ENCODE measurements at regions of chr2 and their contacts with region 1.

Region 1: DNA sequence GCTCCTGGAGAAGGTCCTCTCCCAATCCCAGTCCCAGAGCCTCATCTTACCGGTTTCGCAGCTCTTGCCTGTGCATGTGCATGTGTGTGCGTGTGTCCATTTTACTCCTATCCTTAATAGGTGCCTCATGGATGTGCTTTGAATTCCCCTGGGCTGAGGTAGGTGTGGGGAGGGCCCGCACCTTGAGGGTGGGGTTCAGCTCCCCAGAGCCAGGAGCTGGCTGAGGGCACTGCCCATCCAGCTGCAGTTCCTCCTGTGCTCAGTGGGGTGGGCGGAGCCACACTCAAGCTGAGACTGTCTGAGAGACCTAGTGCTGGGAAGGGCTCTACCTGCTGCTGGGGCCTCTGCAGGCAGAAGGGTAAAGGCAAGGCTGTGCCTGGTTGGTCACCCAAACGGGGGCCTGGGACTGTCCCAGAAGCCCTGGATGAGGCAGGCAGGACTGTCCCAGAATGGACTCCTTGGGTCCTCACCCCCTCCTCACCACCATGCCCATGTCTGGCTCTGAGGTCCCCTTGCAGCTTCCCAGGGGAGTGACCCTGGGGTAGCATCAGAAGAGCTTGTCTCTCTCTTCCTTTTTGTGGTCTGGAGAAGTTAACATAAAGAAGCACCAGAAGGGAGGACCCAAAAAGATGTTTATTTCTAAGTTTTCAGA is 8.9 kb downstream of the GDF7 start:
- DNase-seq: peak; percentile 78
- ATAC-seq: peak; percentile 87
- H3K4me3 ChIP-seq: peak overlapping the region; percentile 7 to 64 (median 36); a peak in 3 of 6 replicates
- H3K27ac ChIP-seq: peak overlapping the region; percentile 75
- H3K4me1 ChIP-seq: peaks cover 44% of the 10 kb centered on the region
- H3K27me3 ChIP-seq: no peaks in the 10 kb centered on the region
- CTCF ChIP-seq: no peak
- EP300 ChIP-seq: 0 out of 4 replicates have a peak, but pooled peaks of 1 of the 2 experiments have one; percentile 7
- POLR2A ChIP-seq: 0 out of 4 replicates have a peak, but pooled peaks of 1 of the 2 experiments have one; percentile 19
- RAD21 ChIP-seq: peak; percentile 12; the same call in 1 of the 2 replicates

Region 2: GRCh38 chr2:19863303-19864041 is 812.4 kb before region 1 on chr2:
- CTCF ChIA-PET with region 1: no interaction called
- POLR2A ChIA-PET with region 1: no interaction called
- in situ Hi-C with region 1: no loop called
- intact Hi-C with region 1: no loop called
- DNase-seq: peak; percentile 76
- ATAC-seq: peak; percentile 96
- H3K4me3 ChIP-seq: peak overlapping the region; percentile 46 to 77 (median 57)
- H3K27ac ChIP-seq: peak overlapping the region; percentile 26
- H3K4me1 ChIP-seq: peaks cover 36% of the 10 kb centered on the region
- H3K27me3 ChIP-seq: peaks cover 2 to 18% of the 10 kb centered on the region in 2 experiments; a peak in 3 of 5 replicates
- CTCF ChIP-seq: peak; percentile 100
- EP300 ChIP-seq: no peak
- POLR2A ChIP-seq: peak in 1 of 2 experiments; percentile 60; a peak in 2 of 4 replicates
- RAD21 ChIP-seq: peak; percentile 100

Region 3: DNA sequence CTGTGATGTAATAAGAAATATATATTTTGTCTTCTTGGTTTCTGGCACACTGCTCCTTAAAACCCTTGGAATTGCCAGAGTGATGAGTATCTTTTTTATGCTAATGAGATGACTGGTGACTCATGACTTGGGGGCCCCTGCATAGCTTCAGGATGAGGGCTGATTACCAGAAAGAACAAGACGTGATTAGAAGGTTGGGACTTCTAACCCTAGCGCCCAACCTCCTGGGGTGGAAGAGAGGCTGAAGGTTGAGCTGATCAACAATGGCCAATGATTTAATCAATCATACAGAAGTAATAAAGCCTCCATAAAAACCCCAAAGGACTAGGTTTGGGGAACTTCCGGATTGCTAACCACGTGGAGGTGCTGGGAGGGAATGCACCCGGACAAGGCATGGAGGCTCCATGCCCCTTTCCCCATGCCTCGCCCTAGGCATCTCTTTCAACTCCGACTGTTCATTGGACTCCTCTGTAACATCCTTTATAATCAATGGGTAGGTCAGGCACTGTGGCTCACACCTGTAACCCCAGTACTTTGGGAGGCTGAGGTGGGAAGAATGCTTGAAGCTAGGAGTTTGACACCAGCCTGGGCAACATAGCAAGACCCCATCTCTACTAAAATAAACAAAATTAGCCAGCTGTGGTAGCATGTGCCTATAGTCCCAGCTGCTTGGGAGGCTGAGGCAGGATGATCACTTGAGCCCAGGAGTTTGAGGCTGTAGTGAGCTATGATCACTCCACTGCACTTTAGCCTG is 113.9 kb before region 1 on chr2:
- CTCF ChIA-PET with region 1: no interaction called
- POLR2A ChIA-PET with region 1: no interaction called
- in situ Hi-C with region 1: no loop called
- intact Hi-C with region 1: no loop called
- DNase-seq: no peak
- ATAC-seq: no peak
- H3K4me3 ChIP-seq: no peak overlapping the region
- H3K27ac ChIP-seq: no peak overlapping the region
- H3K4me1 ChIP-seq: peaks cover 55% of the 10 kb centered on the region
- H3K27me3 ChIP-seq: no peaks in the 10 kb centered on the region
- CTCF ChIP-seq: no peak
- EP300 ChIP-seq: no peak
- POLR2A ChIP-seq: no peak
- RAD21 ChIP-seq: no peak

Region 4: GRCh38 chr2:20661067-20661980 is 14.5 kb before region 1 on chr2:
- CTCF ChIA-PET with region 1: interaction called, 61 read pairs
- POLR2A ChIA-PET with region 1: interaction called, 216 read pairs
- in situ Hi-C with region 1: no loop called
- intact Hi-C with region 1: loop called (anchors 1 kb)
- DNase-seq: peak; percentile 78
- ATAC-seq: peak; percentile 38
- H3K4me3 ChIP-seq: peak overlapping the region in 1 of 3 experiments; percentile 15; a peak in 1 of 6 replicates
- H3K27ac ChIP-seq: no peak overlapping the region
- H3K4me1 ChIP-seq: peaks cover 38% of the 10 kb centered on the region
- H3K27me3 ChIP-seq: peaks cover 26 to 66% of the 10 kb centered on the region in 2 experiments; a peak in 4 of 5 replicates
- CTCF ChIP-seq: peak; percentile 99
- EP300 ChIP-seq: no peak
- POLR2A ChIP-seq: no peak
- RAD21 ChIP-seq: peak; percentile 97

Region 5: GRCh38 chr2:20698916-20699613 is 23.2 kb after region 1 on chr2:
- CTCF ChIA-PET with region 1: no interaction called
- POLR2A ChIA-PET with region 1: no interaction called
- in situ Hi-C with region 1: no loop called
- intact Hi-C with region 1: no loop called
- DNase-seq: no peak
- ATAC-seq: no peak
- H3K4me3 ChIP-seq: no peak overlapping the region
- H3K27ac ChIP-seq: no peak overlapping the region
- H3K4me1 ChIP-seq: peaks cover 15% of the 10 kb centered on the region
- H3K27me3 ChIP-seq: no peaks in the 10 kb centered on the region
- CTCF ChIP-seq: no peak
- EP300 ChIP-seq: no peak
- POLR2A ChIP-seq: no peak
- RAD21 ChIP-seq: no peak

Region 6: GRCh38 chr2:20728114-20728758 is 52.4 kb after region 1 on chr2:
- CTCF ChIA-PET with region 1: no interaction called
- POLR2A ChIA-PET with region 1: interaction called, 9 read pairs
- in situ Hi-C with region 1: no loop called
- intact Hi-C with region 1: loop called (anchors 2 kb)
- DNase-seq: peak; percentile 91
- ATAC-seq: peak; percentile 95
- H3K4me3 ChIP-seq: peak overlapping the region in 1 of 3 experiments; percentile 4; a peak in 1 of 6 replicates
- H3K27ac ChIP-seq: peak overlapping the region; percentile 57
- H3K4me1 ChIP-seq: peaks cover 30% of the 10 kb centered on the region
- H3K27me3 ChIP-seq: no peaks in the 10 kb centered on the region
- CTCF ChIP-seq: 0 out of 2 replicates have a peak, but pooled peaks have one; percentile 13
- EP300 ChIP-seq: peak; percentile 69 to 92; a peak in 2 of 4 replicates
- POLR2A ChIP-seq: no peak
- RAD21 ChIP-seq: no peak

Region 7: DNA sequence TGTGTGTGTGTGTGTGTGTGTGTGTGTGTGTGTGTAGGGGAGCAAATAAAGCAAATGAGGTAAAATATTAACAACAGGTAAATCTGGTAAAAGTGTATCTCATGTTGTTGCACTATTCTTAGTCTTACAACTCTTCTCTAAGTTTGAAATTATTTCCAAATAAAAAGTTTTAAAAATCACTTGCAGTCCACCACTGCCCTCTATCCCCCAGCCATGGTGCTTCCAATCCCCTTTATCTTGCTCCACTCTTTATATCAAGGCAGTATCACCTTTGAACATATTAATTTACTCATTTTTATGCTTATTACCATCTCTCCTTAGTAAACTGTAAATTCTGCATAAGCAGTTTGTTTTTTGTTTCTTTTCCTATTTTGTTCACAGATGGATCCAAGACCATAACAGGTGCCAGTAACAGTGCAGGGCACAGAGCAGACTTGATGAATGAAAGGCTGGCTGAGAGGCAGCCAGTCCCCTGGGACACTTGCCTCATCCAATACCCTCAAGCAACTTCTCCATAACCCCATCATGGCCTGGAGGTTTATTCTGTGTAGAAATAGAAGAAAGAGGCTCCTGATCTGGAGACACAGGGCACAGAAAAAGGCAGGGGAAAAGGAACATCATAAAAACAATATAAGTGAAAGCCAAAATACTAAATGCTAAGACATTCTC is 79.4 kb after region 1 on chr2:
- CTCF ChIA-PET with region 1: no interaction called
- POLR2A ChIA-PET with region 1: no interaction called
- in situ Hi-C with region 1: no loop called
- intact Hi-C with region 1: loop called (anchors 5 kb)
- DNase-seq: no peak
- ATAC-seq: peak; percentile 36; the same call in 2 of the 3 replicates
- H3K4me3 ChIP-seq: no peak overlapping the region
- H3K27ac ChIP-seq: no peak overlapping the region
- H3K4me1 ChIP-seq: peaks cover 11% of the 10 kb centered on the region
- H3K27me3 ChIP-seq: no peaks in the 10 kb centered on the region
- CTCF ChIP-seq: peak; percentile 26; the same call in 1 of the 2 replicates
- EP300 ChIP-seq: no peak
- POLR2A ChIP-seq: no peak
- RAD21 ChIP-seq: no peak

Region 8: DNA sequence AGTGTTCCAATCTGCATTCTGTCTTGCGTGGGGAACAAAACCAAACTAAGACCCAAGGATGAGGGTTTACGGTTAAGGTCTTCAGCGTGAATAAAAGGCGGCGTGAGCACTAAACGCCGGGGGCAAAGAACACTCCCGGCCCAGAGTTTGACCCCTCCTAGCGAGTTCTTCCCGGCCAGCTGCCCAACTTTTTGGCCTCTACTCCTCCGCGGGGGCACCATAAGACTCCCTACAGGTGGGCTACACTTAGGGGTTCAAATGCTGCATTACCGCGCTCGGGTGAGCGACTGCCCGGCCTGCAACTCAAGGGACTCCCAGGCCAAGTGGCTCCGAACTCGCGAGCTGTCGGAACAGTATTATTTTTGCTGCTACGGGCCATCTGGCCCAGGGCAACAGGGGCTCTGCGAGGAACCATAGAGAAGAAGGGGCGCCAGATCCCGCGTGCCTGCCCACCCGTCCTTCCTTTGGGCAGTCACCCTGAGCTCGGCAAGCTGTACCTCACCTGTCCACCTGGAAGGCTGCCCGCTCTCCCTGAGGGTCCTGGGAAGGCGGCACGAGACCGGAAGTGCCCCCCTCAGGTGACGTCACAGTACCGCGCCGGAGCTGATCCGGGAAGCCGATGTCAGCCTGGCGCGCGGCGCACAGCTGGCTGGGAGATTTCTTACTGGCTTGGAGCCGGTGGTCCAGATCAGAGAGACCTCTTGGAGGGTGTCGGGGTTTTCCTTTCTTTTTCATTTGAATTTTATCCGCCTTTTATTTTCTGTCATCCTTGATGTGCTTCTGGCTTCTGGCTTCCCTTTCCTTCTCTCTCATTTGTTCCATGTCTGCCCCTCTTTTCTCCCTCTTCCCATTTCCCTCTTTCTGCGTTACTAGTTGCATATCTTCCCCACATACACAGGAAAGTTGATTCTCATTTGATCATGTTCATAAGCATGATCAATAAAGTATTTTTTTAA is 147.0 kb after region 1 on chr2 and contains the start of gene LDAH:
- CTCF ChIA-PET with region 1: no interaction called
- POLR2A ChIA-PET with region 1: interaction called, 13 read pairs
- in situ Hi-C with region 1: no loop called
- intact Hi-C with region 1: no loop called
- DNase-seq: peak; percentile 91
- ATAC-seq: peak; percentile 91
- H3K4me3 ChIP-seq: peak within 1 kb of the TSS; percentile 79 to 90 (median 87)
- H3K27ac ChIP-seq: peak within 1 kb of the TSS; percentile 91
- H3K4me1 ChIP-seq: peaks cover 13% of the 10 kb centered on the region
- H3K27me3 ChIP-seq: no peaks in the 10 kb centered on the region; a peak in 1 of 5 replicates
- CTCF ChIP-seq: no peak
- EP300 ChIP-seq: peak in 1 of 2 experiments; percentile 62; a peak in 2 of 4 replicates
- POLR2A ChIP-seq: peak; percentile 93 to 95
- RAD21 ChIP-seq: peak; percentile 59; the same call in 1 of the 2 replicates
- total RNA-seq, gene LDAH: 46.2 and 66.4 TPM in 2 replicates

Region 9: DNA sequence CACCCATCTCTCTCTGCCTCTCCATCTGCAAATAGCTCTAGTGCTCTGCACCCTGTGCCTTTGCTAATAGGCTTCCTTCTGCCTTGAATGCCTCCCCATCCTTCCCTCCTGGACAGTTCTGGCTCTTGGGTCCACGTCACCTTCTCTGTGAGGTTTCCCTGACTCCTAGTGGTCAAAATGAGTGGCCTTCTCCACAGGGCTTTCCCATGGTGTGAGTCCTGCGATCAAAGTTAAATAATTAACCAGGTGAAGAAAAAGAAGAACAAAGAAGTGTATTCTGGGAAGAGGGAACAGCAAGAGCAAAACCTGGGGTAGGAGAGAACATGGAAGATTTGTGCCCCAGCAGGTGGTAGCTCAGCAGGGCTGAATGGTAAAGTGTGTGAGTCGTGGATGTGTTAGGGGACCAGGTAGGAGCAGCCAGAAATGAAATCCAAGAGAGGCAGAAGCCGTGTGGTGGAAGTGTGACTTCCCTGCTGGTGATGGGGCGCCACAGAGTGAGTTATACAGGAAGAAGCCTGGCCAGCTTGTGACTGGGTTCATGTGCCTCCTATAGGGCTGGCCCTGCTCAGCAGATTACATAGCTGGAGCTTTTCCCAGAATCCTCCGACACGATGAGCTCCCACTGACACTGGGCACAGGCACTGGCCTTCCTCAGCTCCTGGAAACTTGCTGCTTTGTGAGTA is 240.9 kb after region 1 on chr2:
- CTCF ChIA-PET with region 1: no interaction called
- POLR2A ChIA-PET with region 1: no interaction called
- in situ Hi-C with region 1: no loop called
- intact Hi-C with region 1: loop called (anchors 2 kb)
- DNase-seq: peak; percentile 74
- ATAC-seq: peak; percentile 94
- H3K4me3 ChIP-seq: peak overlapping the region in 1 of 3 experiments; percentile 31; a peak in 2 of 6 replicates
- H3K27ac ChIP-seq: no peak overlapping the region
- H3K4me1 ChIP-seq: peaks cover 14% of the 10 kb centered on the region
- H3K27me3 ChIP-seq: peaks cover 0 to 22% of the 10 kb centered on the region in 2 experiments; a peak in 4 of 5 replicates
- CTCF ChIP-seq: peak; percentile 88
- EP300 ChIP-seq: no peak
- POLR2A ChIP-seq: no peak
- RAD21 ChIP-seq: peak; percentile 70